ENCODE measurements at regions of chr2 and their contacts with region 1.

Region 1: DNA sequence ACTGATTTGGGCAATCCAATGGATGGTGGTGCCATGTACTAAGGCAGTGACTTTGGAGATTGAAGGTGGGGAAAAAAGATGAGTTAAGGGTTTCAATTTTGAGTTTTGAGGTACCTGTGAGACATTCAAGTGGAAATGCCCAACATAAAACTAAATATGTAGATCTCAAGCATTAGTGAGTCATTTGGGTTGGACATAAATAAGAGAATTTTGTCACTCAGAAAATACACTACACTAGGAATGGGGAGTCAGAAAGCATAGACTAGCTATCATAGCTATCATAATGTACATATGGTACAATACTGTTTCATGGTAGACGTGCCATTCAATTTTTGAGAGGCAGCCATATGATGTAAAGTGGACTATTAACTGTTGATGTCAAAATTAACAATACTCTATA is 56.1 kb downstream of the FBXO11 start:
- DNase-seq: no peak
- ATAC-seq: no peak
- H3K4me3 ChIP-seq: no peak overlapping the region
- H3K27ac ChIP-seq: no peak overlapping the region
- H3K4me1 ChIP-seq: no peaks in the 10 kb centered on the region
- H3K27me3 ChIP-seq: no peaks in the 10 kb centered on the region
- CTCF ChIP-seq: no peak

Region 2: DNA sequence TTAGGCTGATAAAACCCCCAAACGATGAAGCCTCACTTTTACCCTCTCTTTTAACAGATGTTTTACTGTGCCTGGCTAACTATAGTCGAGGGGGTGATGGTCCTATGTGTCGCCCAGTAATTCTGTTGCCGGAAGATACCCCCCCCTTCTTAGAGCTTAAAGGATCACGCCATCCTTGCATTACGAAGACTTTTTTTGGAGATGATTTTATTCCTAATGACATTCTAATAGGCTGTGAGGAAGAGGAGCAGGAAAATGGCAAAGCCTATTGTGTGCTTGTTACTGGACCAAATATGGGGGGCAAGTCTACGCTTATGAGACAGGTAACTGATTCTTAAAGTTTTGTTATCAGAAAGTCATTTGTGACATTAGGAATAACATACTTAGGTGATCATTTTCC is 46.8 kb before region 1 on chr2:
- intact Hi-C with region 1: no loop called
- DNase-seq: no peak
- ATAC-seq: no peak
- H3K4me3 ChIP-seq: no peak overlapping the region
- H3K27ac ChIP-seq: no peak overlapping the region
- H3K4me1 ChIP-seq: peaks cover 12% of the 10 kb centered on the region
- H3K27me3 ChIP-seq: no peaks in the 10 kb centered on the region
- CTCF ChIP-seq: no peak

Region 3: GRCh38 chr2:47906157-47907038 is 56.2 kb after region 1 on chr2 and contains the start of gene FBXO11:
- intact Hi-C with region 1: loop called (anchors 10 kb)
- DNase-seq: peak; percentile 97
- ATAC-seq: peak; percentile 95
- H3K4me3 ChIP-seq: peak within 1 kb of the TSS; percentile 82
- H3K27ac ChIP-seq: peak within 1 kb of the TSS; percentile 99
- H3K4me1 ChIP-seq: peaks cover 12% of the 10 kb centered on the region
- H3K27me3 ChIP-seq: no peaks in the 10 kb centered on the region
- CTCF ChIP-seq: peak; percentile 56
- total RNA-seq, gene FBXO11: 69.3 TPM

Region 4: DNA sequence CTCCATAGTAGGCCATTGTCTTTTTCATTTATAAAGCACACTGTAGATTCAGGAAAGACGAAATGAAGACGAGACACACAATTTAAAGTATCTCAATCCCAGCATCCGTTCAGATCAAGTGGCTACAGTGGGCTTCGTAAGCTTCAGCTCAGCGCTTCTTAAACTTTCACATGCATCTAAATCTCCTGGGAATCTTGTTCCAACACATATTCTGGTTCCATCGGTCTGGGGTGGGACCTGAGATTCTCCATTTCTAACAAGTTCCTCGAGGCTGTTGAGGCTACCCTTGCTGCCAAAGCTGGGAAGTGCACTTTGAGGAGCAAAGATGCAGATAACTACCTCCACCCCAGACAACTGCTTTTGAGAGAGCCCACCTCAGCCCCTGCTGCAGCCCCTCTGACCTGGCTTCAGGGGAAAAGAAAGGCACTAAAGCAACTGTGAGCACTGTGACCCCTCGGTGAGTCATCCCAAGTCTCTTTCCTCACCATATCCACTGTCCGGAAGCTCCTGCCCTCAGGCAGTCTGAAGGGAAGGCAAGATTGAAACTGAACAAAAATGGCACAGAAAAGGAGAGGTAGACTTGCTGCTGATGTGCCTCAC is 257.2 kb after region 1 on chr2:
- intact Hi-C with region 1: loop called (anchors 10 kb)
- DNase-seq: no peak
- ATAC-seq: no peak
- H3K4me3 ChIP-seq: peak overlapping the region; percentile 1
- H3K27ac ChIP-seq: peak overlapping the region; percentile 56
- H3K4me1 ChIP-seq: peaks cover 18% of the 10 kb centered on the region
- H3K27me3 ChIP-seq: no peaks in the 10 kb centered on the region
- CTCF ChIP-seq: no peak

Measured in upper lobe of right lung (tissue), 1 donor.